Mammary epithelial cell (primary cell): ENCODE measurements at regions of chr18 and their contacts with region 1.

Region 1: GRCh38 chr18:76573325-76574025 is 78.4 kb upstream of the ZNF516 start:
- DNase-seq: peak; percentile 87
- H3K4me3 ChIP-seq: no peak overlapping the region
- H3K27ac ChIP-seq: peak overlapping the region; percentile 46
- H3K4me1 ChIP-seq: peaks cover 12% of the 10 kb centered on the region
- H3K27me3 ChIP-seq: no peaks in the 10 kb centered on the region
- CTCF ChIP-seq: no peak

Region 2: GRCh38 chr18:76390452-76391035 is 182.9 kb before region 1 on chr18:
- CTCF ChIA-PET with region 1: no interaction called
- dilution Hi-C with region 1: no loop called
- in situ Hi-C with region 1: no loop called
- intact Hi-C with region 1: no loop called
- DNase-seq: no peak
- H3K4me3 ChIP-seq: no peak overlapping the region
- H3K27ac ChIP-seq: no peak overlapping the region
- H3K4me1 ChIP-seq: peaks cover 12% of the 10 kb centered on the region
- H3K27me3 ChIP-seq: no peaks in the 10 kb centered on the region
- CTCF ChIP-seq: no peak

Region 3: GRCh38 chr18:76450452-76451395 is 122.8 kb before region 1 on chr18:
- CTCF ChIA-PET with region 1: no interaction called
- dilution Hi-C with region 1: no loop called
- in situ Hi-C with region 1: no loop called
- intact Hi-C with region 1: loop called (anchors 5 kb)
- DNase-seq: peak; percentile 65
- H3K4me3 ChIP-seq: peak overlapping the region; percentile 52 to 62 (median 52)
- H3K27ac ChIP-seq: peak overlapping the region; percentile 77
- H3K4me1 ChIP-seq: peaks cover 30% of the 10 kb centered on the region
- H3K27me3 ChIP-seq: no peaks in the 10 kb centered on the region
- CTCF ChIP-seq: no peak